H1 (cell line): ENCODE measurements at regions of chr6 and their contacts with region 1.

Region 1: DNA sequence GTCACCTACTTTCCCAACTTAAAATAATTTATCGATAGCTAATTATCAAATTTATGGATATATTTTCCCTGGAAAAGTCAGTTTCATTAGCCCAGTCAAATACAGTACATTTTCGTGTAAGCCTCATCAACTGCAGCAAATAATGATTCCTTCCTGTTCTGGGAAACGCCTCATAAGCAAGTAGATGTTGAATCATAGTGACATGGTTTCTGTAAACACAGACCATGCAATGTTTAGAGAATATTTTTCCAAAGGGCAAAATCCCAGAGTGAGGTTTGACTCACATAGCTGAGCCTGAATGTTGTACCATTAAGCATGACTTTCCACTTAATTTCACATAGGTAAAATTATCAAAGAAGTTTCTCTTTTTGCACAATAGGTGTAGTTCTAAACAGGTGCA is 16.7 kb upstream of the VNN1 start:
- DNase-seq: no peak
- H3K4me3 ChIP-seq: no peak overlapping the region
- H3K27ac ChIP-seq: no peak overlapping the region
- H3K4me1 ChIP-seq: no peaks in the 10 kb centered on the region
- H3K27me3 ChIP-seq: no peaks in the 10 kb centered on the region
- CTCF ChIP-seq: no peak
- EP300 ChIP-seq: no peak
- POLR2A ChIP-seq: no peak
- RAD21 ChIP-seq: no peak

Region 2: DNA sequence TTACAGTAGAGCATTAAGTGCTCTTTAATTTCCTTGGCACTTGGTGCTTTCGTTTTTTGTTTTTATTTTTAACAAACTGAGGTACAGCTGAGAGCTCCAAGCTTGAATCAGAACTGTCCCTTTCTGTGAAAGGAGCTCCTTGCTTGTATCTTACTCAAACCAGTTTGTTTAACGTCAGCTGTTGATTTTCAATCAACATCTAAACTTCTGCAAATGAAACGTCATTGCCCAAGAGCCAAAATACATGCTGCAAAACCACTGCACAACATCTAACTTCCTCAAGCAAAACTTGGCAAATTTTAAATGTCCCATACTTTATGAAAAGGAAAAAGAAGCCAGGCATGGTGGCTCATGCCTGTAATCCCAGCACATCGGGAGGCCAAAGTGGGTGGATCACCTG is 11.9 kb after region 1 on chr6:
- CTCF ChIA-PET with region 1: interaction called, 15 read pairs
- POLR2A ChIA-PET with region 1: no interaction called
- DNase-seq: no peak
- H3K4me3 ChIP-seq: no peak overlapping the region
- H3K27ac ChIP-seq: no peak overlapping the region
- H3K4me1 ChIP-seq: no peaks in the 10 kb centered on the region
- H3K27me3 ChIP-seq: no peaks in the 10 kb centered on the region
- CTCF ChIP-seq: no peak
- EP300 ChIP-seq: no peak
- POLR2A ChIP-seq: no peak
- RAD21 ChIP-seq: no peak

Region 3: DNA sequence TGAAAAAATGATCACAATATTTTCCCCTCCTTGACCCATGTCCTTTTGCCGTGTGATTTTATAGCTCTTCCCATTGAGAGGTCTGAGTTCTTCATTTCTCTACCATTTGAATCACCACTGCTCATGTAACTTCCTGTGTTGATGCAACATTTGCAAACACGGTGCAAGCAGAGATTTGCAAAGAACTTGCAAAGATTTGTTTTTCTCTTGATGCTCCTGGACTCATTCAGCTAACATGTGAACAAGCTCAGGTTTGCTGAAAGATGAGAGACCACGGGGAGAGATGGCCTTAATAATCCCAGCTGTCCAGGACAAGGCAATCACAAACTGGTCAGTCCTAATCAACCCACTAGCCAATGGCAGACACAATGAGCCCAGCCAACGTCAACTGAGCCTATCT is 18.6 kb after region 1 on chr6:
- CTCF ChIA-PET with region 1: interaction called, 10 read pairs
- POLR2A ChIA-PET with region 1: no interaction called
- DNase-seq: no peak
- H3K4me3 ChIP-seq: no peak overlapping the region
- H3K27ac ChIP-seq: no peak overlapping the region
- H3K4me1 ChIP-seq: no peaks in the 10 kb centered on the region
- H3K27me3 ChIP-seq: no peaks in the 10 kb centered on the region
- CTCF ChIP-seq: no peak
- EP300 ChIP-seq: no peak
- POLR2A ChIP-seq: no peak
- RAD21 ChIP-seq: no peak

Region 4: GRCh38 chr6:132843316-132844043 is 112.9 kb after region 1 on chr6:
- CTCF ChIA-PET with region 1: no interaction called
- POLR2A ChIA-PET with region 1: no interaction called
- DNase-seq: no peak
- H3K4me3 ChIP-seq: no peak overlapping the region
- H3K27ac ChIP-seq: no peak overlapping the region
- H3K4me1 ChIP-seq: peaks cover 0 to 2% (median 0%) of the 10 kb centered on the region in 4 experiments; a peak in 2 of 7 replicates
- H3K27me3 ChIP-seq: no peaks in the 10 kb centered on the region
- CTCF ChIP-seq: no peak
- EP300 ChIP-seq: no peak
- POLR2A ChIP-seq: no peak
- RAD21 ChIP-seq: no peak